CD8-positive, alpha-beta T cell (primary cell): ENCODE measurements at regions of chr3 and their contacts with region 1.

Region 1: DNA sequence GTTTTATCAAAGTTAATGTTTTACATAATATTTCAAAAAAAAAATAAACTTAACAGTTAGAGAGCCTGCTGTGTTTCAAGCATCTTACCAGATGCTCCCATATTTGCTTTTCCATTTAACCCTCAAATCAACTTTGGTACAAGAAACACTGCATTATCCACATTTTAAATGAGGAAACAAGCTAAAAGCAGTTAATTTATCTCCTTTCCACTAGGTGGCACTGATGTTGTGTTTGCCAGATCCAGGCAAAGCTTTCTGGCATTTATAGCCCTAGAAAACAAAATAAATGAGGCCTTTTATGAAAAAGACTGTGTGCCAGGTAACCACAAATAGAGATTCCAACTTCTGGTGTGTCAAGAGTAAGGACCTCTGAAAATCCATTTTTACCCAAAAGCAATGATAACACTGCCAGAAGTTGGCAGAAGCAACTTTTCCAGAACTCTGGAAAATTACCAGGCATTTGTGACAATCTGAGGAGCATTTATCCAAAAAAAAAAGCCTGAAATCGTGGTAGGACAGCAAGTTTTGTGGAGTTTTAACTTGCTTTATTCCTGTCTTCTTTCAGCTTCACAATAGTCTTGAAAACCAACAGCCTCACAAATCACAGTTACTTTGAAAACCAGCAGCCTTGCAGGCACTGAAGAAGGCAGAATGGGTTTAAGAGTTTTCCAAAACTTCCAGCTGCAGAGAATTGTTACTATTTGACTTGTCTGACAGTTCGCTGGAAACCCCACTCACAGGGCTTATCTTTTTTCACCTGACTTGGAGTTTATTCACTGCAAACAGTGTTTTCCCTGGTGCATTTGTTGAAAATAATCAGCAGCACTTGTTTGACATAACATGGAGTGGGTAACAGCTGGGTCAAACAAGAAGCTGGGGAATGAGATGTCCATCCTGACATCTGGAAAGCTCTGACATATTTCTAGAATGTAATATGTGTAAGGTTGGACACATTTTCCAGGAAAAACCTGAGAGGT is 9.2 kb downstream of the FAM162A start:
- DNase-seq: peak in 3 of 9 experiments; percentile 21 to 68 (median 51)
- ATAC-seq: peak; percentile 68
- H3K4me3 ChIP-seq: no peak overlapping the region
- H3K4me3 Mint-ChIP-seq: no peak overlapping the region
- H3K27ac ChIP-seq: no peak overlapping the region
- H3K27ac Mint-ChIP-seq: no peak overlapping the region
- H3K4me1 ChIP-seq: no peaks in the 10 kb centered on the region
- H3K4me1 Mint-ChIP-seq: peaks cover 8% of the 10 kb centered on the region
- H3K27me3 ChIP-seq: no peaks in the 10 kb centered on the region
- H3K27me3 Mint-ChIP-seq: no peaks in the 10 kb centered on the region
- CTCF ChIP-seq: peak; percentile 93

Region 2: DNA sequence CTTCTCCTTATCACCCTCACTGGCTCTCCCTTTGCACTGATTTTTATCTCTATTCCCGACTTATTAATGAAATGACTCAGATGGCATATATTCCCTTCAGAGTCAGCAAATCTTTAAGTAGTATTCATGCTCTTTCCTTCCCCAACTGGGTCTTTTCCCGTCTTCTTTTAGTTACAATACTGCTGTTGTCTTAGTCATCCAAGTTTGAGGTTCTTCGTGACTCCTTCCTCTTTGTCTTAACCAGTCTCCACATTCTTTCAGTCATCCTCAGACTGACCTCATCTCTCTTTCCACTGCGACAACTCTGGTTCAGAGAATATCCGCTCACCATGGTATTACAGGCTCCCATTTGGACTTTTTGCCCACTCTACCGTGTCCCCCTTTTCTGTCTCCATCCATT is 10.3 kb after region 1 on chr3:
- CTCF ChIA-PET with region 1: interaction called, 10 read pairs
- POLR2A ChIA-PET with region 1: no interaction called
- intact Hi-C with region 1: loop called in 1 of 2 experiments (anchors 2 kb)
- DNase-seq: no peak
- ATAC-seq: no peak
- H3K4me3 ChIP-seq: no peak overlapping the region
- H3K4me3 Mint-ChIP-seq: no peak overlapping the region
- H3K27ac ChIP-seq: no peak overlapping the region
- H3K27ac Mint-ChIP-seq: peak overlapping the region; percentile 20
- H3K4me1 ChIP-seq: no peaks in the 10 kb centered on the region
- H3K4me1 Mint-ChIP-seq: peaks cover 5% of the 10 kb centered on the region
- H3K27me3 ChIP-seq: no peaks in the 10 kb centered on the region
- H3K27me3 Mint-ChIP-seq: no peaks in the 10 kb centered on the region
- CTCF ChIP-seq: no peak

Region 3: GRCh38 chr3:122409446-122409845 is 16.3 kb after region 1 on chr3:
- CTCF ChIA-PET with region 1: interaction called, 9 read pairs
- POLR2A ChIA-PET with region 1: no interaction called
- intact Hi-C with region 1: loop called in 1 of 2 experiments (anchors 2 kb)
- DNase-seq: no peak
- ATAC-seq: no peak
- H3K4me3 ChIP-seq: no peak overlapping the region
- H3K4me3 Mint-ChIP-seq: no peak overlapping the region
- H3K27ac ChIP-seq: no peak overlapping the region
- H3K27ac Mint-ChIP-seq: peak overlapping the region; percentile 62
- H3K4me1 ChIP-seq: peaks cover 2% of the 10 kb centered on the region
- H3K4me1 Mint-ChIP-seq: peaks cover 27% of the 10 kb centered on the region
- H3K27me3 ChIP-seq: no peaks in the 10 kb centered on the region
- H3K27me3 Mint-ChIP-seq: no peaks in the 10 kb centered on the region
- CTCF ChIP-seq: no peak

Region 4: DNA sequence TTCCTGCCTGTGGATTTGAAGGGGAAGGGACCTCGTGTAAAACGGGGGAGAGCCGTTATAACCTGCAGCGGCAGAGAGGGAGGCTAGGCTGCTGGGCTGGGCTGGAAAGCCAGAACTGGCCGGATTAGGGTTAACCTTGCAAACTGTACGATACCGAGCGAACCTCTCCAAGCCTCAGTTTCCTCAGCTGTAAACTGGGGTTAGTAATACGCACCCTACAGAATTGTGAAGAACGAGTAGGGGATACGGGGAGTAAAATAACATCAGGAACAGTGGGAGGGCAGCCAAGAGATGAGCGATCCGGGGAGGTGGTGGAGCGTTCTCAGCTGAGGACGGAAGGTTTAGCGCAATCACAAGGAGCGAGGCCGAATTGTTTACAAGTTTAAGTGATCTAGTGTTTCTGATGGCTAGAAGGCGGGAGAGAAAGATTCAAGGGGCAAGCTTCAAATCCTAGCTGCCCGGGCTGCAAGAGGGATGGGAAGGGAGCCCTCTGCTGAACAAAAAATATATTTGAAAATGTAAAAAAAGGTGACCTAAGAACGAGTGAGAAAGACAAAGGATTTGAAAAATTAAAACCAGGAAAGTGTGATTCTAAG is 635.2 kb after region 1 on chr3:
- CTCF ChIA-PET with region 1: interaction called, 3 read pairs
- POLR2A ChIA-PET with region 1: no interaction called
- intact Hi-C with region 1: loop called in 1 of 2 experiments (anchors 5 kb)
- DNase-seq: peak in 3 of 9 experiments; percentile 13 to 54 (median 45)
- ATAC-seq: no peak
- H3K4me3 ChIP-seq: peak overlapping the region; percentile 46 to 49
- H3K4me3 Mint-ChIP-seq: peak overlapping the region; percentile 76
- H3K27ac ChIP-seq: no peak overlapping the region
- H3K27ac Mint-ChIP-seq: no peak overlapping the region
- H3K4me1 ChIP-seq: peaks cover 7% of the 10 kb centered on the region
- H3K4me1 Mint-ChIP-seq: peaks cover 22% of the 10 kb centered on the region
- H3K27me3 ChIP-seq: peaks cover 16 to 28% of the 10 kb centered on the region in 2 experiments
- H3K27me3 Mint-ChIP-seq: peaks cover 56% of the 10 kb centered on the region
- CTCF ChIP-seq: peak; percentile 17